ENCODE measurements at regions of chr5 and their contacts with region 1.

Region 1: DNA sequence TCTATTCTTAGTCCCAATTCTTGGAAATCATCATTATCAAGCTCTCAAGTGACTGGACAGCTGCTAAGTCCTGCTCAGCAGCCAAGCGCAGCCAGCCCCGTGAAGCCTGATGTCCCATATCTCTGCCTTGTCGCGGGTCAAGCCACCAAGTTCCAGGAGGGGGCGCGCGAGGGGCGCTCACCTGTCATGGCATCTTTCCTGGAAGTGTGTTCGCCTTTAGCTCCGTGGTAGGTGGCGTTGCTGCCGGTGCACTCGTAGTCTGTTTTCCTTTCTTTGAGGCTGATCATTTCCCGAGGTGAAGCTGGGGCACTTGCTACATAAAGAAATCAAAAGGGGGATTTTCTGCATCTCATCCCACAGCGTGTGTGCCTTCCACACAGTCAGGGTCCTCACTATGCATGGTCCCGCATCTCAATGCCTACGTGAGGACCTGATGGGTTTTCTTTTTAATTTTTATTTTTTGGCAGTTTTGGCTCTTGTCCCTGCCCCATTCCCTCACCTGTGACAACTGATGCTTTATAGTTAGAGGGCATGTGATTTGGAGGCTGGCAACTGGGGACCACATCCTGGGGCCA is 227.0 kb upstream of the DAP start:
- DNase-seq: peak; percentile 42
- ATAC-seq: peak; percentile 99
- H3K4me3 ChIP-seq: no peak overlapping the region
- H3K27ac ChIP-seq: no peak overlapping the region
- H3K4me1 ChIP-seq: no peaks in the 10 kb centered on the region
- H3K27me3 ChIP-seq: peaks cover 31% of the 10 kb centered on the region; the same call in 1 of the 2 replicates
- CTCF ChIP-seq: peak; percentile 68 to 95 (median 91)
- POLR2A ChIP-seq: no peak
- RAD21 ChIP-seq: peak; percentile 65

Region 2: DNA sequence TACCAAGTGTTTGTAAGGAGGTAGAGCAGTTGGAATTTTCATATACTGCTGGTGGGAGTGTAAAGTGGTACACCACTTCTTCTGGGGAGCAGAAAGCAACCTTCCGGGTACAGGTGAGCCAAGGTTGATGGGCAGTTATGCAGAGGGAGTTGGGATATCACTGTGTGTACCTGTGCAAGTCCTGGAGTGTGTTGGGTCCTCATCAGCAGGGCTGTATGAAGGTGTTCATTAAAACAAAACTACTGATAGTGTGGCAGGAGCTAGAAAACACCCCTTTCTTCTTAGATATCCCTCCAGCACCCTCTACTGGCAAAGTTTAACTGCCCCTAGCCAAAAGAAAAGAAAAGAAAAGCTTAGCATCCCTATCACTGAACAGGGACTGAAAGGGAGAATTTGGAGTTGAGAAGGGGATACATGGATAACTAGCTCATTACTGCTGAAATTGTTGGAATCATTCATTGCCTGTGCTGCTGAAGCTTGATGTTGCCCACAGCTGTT is 623.8 kb before region 1 on chr5:
- CTCF ChIA-PET with region 1: no interaction called
- POLR2A ChIA-PET with region 1: no interaction called
- RAD21 ChIA-PET with region 1: no interaction called
- intact Hi-C with region 1: no loop called
- DNase-seq: no peak
- ATAC-seq: peak; percentile 66
- H3K4me3 ChIP-seq: no peak overlapping the region
- H3K27ac ChIP-seq: no peak overlapping the region
- H3K4me1 ChIP-seq: peaks cover 8 to 25% of the 10 kb centered on the region in 2 experiments
- H3K27me3 ChIP-seq: no peaks in the 10 kb centered on the region
- CTCF ChIP-seq: peak; percentile 18 to 68 (median 49); a peak in 4 of 6 replicates
- POLR2A ChIP-seq: no peak
- RAD21 ChIP-seq: peak; percentile 58

Region 3: GRCh38 chr5:11000515-11001353 is 12.7 kb after region 1 on chr5:
- CTCF ChIA-PET with region 1: interaction called, 13 read pairs
- POLR2A ChIA-PET with region 1: no interaction called
- RAD21 ChIA-PET with region 1: no interaction called
- intact Hi-C with region 1: no loop called
- DNase-seq: no peak
- ATAC-seq: no peak
- H3K4me3 ChIP-seq: no peak overlapping the region
- H3K27ac ChIP-seq: no peak overlapping the region
- H3K4me1 ChIP-seq: no peaks in the 10 kb centered on the region
- H3K27me3 ChIP-seq: peaks cover 26% of the 10 kb centered on the region
- CTCF ChIP-seq: no peak
- POLR2A ChIP-seq: no peak
- RAD21 ChIP-seq: no peak

Region 4: DNA sequence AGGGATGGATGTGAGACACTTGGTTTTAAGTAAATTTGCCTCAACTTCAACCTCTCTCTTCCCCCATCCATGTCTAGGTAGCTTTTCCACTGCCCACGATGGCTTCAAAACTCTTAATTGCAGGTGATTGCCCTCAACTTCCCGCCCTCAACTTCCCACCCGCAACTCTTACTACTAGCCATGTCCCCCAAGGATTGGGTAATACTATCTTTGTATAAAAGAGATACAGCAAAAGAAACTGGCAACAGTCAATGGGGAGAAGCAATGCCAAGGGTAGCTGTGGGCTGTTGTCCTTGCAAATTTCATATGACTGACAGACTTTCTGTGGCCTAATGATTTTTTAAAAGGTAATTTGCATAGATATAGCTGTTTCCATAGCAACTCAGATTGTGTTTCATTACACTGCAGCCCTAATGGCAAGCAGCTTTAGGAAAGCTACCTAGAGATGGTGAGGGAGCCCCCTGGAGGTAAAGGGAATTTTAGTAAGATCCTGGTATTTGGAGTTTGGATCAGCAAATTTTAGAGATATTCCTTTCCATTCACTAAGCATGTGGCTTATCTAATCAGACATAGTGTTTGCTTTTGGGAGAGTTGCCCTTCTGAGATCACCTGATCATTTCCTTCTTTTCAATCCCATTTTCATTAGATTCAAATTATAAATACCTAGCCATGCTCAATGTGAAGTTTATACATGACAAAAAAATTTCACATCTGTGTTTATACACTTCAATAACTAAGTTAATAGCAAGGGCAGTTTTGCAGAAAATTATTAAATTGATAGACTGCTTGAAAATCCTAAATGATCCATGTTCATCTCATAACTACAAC is 194.6 kb after region 1 on chr5:
- CTCF ChIA-PET with region 1: interaction called, 7 read pairs
- POLR2A ChIA-PET with region 1: interaction called, 3 read pairs
- RAD21 ChIA-PET with region 1: no interaction called
- intact Hi-C with region 1: loop called (anchors 2 kb)
- DNase-seq: peak; percentile 18
- ATAC-seq: peak; percentile 47; the same call in 1 of the 2 replicates
- H3K4me3 ChIP-seq: no peak overlapping the region
- H3K27ac ChIP-seq: no peak overlapping the region
- H3K4me1 ChIP-seq: no peaks in the 10 kb centered on the region
- H3K27me3 ChIP-seq: 0 out of 2 replicates have a peak, but pooled peaks cover 4% of the 10 kb centered on the region
- CTCF ChIP-seq: peak; percentile 26 to 64 (median 57); a peak in 5 of 6 replicates
- POLR2A ChIP-seq: no peak
- RAD21 ChIP-seq: peak; percentile 47